HepG2 (cell line): ENCODE measurements at regions of chr2 and their contacts with region 1.

Region 1: DNA sequence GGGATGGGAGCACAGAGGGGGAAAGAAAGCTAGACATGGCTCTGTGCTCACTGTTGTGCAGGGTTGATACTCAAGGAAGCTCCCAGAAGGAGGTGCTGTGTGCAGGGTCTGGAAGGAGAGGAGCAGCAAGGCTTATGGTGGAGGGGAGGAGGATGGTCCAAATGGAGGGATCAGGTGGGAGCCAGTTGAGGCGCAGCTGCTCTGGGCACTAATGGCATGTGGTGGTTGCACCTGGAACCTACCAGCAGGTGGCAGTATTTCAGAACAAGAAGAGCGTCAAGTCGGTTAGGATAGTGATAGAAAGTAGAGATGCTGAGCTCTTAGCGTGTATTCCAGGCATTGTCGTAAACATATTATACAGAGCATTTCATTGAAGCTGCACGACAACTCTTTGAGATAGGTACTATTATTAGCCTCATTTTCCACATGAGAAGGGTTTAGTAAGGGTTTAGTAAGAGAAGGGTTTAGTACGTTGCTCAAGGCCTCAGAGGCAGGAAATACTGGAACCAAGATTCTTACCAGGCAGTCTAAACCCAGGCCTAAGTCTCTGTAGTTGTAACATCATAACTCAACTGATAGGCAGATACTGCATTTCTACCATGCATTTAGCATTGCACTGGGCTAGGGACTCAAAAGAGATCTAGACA is 223.7 kb downstream of the CYP26B1 start:
- DNase-seq: peak; percentile 76
- ATAC-seq: peak; percentile 89
- H3K4me3 ChIP-seq: no peak overlapping the region
- H3K27ac ChIP-seq: no peak overlapping the region
- H3K4me1 ChIP-seq: no peaks in the 10 kb centered on the region
- H3K27me3 ChIP-seq: peaks cover 5 to 45% of the 10 kb centered on the region in 2 experiments; a peak in 4 of 5 replicates
- CTCF ChIP-seq: peak; percentile 93
- EP300 ChIP-seq: no peak
- POLR2A ChIP-seq: no peak
- RAD21 ChIP-seq: peak; percentile 78; the same call in 1 of the 2 replicates

Region 2: GRCh38 chr2:72104821-72105588 is 181.0 kb after region 1 on chr2:
- CTCF ChIA-PET with region 1: interaction called, 9 read pairs
- POLR2A ChIA-PET with region 1: no interaction called
- in situ Hi-C with region 1: no loop called
- intact Hi-C with region 1: loop called (anchors 1 kb)
- DNase-seq: peak; percentile 15
- ATAC-seq: peak; percentile 81
- H3K4me3 ChIP-seq: no peak overlapping the region
- H3K27ac ChIP-seq: no peak overlapping the region
- H3K4me1 ChIP-seq: no peaks in the 10 kb centered on the region
- H3K27me3 ChIP-seq: peaks cover 2 to 29% of the 10 kb centered on the region in 2 experiments; a peak in 3 of 5 replicates
- CTCF ChIP-seq: peak; percentile 68
- EP300 ChIP-seq: no peak
- POLR2A ChIP-seq: no peak
- RAD21 ChIP-seq: peak; percentile 53

Region 3: DNA sequence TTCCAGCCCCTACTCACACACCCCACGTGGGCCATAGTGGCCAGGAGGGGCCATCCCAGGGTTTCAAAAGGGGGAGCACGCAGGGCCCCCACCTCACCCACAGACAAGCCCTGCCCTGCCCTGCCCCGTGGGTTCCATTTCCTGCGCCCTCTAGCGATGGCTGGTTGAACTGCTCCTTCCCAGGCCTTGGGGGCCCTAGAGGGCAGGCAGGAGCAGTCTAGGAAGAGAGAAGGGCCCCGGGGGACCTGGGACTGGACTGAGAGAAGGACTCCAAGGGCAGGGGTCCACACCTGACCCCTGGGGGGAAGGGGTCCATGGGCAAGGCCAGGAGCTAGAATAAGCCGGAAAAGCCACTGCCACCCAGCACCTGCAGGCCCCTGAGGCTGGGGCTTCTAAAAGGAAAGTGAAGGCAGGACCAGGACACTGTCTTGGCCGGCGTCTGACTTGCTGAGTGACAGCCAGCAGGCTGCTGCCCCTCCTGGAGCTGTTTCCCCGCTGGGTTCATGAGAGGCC is 213.5 kb after region 1 on chr2:
- CTCF ChIA-PET with region 1: interaction called, 20 read pairs
- POLR2A ChIA-PET with region 1: no interaction called
- in situ Hi-C with region 1: no loop called
- intact Hi-C with region 1: loop called (anchors 1 kb)
- DNase-seq: peak; percentile 58
- ATAC-seq: peak; percentile 88
- H3K4me3 ChIP-seq: peak overlapping the region; percentile 26 to 63 (median 41); a peak in 3 of 6 replicates
- H3K27ac ChIP-seq: no peak overlapping the region
- H3K4me1 ChIP-seq: peaks cover 24% of the 10 kb centered on the region
- H3K27me3 ChIP-seq: peaks cover 20 to 84% of the 10 kb centered on the region in 2 experiments
- CTCF ChIP-seq: peak; percentile 96
- EP300 ChIP-seq: no peak
- POLR2A ChIP-seq: no peak
- RAD21 ChIP-seq: peak; percentile 72